Activated naive CD4-positive, alpha-beta T cell treated with anti-CD3 and anti-CD28 coated beads for 36 hours (primary cell): ENCODE measurements at regions of chr17 and their contacts with region 1.

Region 1: DNA sequence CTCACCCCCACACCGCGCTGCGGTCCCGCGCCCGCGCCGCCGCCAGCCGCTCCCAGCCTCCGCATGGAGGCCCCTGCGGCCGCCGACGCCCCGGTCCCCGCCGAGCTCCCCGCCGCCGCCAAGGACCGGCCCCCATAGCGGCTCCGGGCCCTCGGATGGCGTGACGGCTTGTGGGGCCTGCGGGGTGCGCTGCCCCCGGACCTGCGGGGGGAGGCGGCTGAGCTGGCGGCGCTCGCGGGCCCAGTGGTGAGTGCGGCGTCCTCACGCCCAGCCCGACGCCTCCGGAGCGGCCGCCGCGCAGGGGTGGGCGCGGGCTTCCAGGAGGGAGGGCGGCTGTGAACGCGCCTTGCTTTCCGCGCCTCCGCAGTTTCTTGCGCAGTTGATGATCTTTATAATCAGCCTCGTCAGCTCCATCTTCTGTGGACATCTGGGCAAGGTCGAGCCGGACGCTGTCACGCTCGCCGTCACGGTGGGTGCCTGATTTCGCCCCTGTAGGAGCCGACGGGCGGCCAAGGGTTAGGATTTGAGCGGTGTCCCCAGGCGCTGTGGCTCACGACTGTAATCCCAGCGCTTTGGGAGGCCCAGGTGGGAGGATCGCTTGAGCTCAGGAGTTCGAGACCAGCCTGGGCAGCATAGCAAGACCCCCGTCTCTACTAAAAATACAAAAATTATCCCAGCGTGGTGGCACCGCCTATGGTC is 46.4 kb downstream of the SLC47A1 start:
- DNase-seq: no peak
- H3K4me3 Mint-ChIP-seq: peak overlapping the region; percentile 32
- H3K27ac Mint-ChIP-seq: no peak overlapping the region
- H3K4me1 Mint-ChIP-seq: peaks cover 4% of the 10 kb centered on the region
- H3K27me3 Mint-ChIP-seq: peaks cover 26% of the 10 kb centered on the region

Region 2: GRCh38 chr17:19520641-19521040 is 59.4 kb before region 1 on chr17:
- CTCF ChIA-PET with region 1: no interaction called
- intact Hi-C with region 1: loop called (anchors 10 kb)
- DNase-seq: no peak
- H3K4me3 Mint-ChIP-seq: no peak overlapping the region
- H3K27ac Mint-ChIP-seq: no peak overlapping the region
- H3K4me1 Mint-ChIP-seq: peaks cover 12% of the 10 kb centered on the region
- H3K27me3 Mint-ChIP-seq: no peaks in the 10 kb centered on the region